MCF 10A (cell line): ENCODE measurements at regions of chr11 and their contacts with region 1.

Region 1: DNA sequence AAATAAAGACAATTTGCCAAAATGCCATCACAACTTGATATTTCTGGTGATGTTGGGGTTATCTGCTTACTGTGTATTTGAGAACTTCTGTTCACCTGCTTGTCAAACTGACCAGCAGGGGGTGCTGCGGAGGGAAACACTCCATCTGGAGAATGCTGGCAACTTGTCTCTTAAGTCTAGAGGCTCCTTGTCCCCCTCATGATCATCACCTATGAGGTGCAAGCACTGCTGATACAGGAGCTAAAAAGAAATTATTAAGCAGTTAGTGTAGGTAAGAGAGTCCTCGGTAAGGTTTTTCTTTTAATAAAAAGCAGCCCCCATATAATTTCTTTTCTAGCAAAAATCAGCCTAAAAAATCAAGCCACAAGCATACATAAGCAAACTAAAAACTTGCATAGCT is 32.7 kb upstream of the GLYATL1B start:
- DNase-seq: peak; percentile 69
- H3K4me3 Mint-ChIP-seq: no peak overlapping the region
- H3K27ac Mint-ChIP-seq: no peak overlapping the region
- H3K4me1 Mint-ChIP-seq: peaks cover 7% of the 10 kb centered on the region
- H3K27me3 Mint-ChIP-seq: peaks cover 64% of the 10 kb centered on the region
- CTCF ChIP-seq: peak; percentile 71

Region 2: DNA sequence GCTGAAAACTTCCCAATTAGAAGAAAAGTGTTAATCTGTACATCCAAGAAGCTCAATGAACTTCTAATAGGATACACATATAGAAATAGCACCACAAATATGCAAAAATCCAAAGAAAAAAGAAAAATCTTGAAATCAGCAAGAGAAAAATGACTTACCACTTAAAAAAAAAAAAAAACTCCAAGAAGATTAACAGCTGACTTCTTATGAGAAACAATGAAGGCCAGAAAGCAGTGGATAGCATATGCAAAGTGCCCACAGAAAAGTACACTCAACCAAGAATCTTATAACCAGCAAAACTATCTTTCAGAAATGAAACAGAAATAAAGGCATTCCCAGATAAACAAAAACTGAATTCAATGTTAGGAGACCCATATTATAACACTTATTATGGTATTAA is 581.5 kb before region 1 on chr11:
- CTCF ChIA-PET with region 1: no interaction called
- POLR2A ChIA-PET with region 1: no interaction called
- intact Hi-C with region 1: no loop called
- DNase-seq: no peak
- H3K4me3 Mint-ChIP-seq: no peak overlapping the region
- H3K27ac Mint-ChIP-seq: no peak overlapping the region
- H3K4me1 Mint-ChIP-seq: no peaks in the 10 kb centered on the region
- H3K27me3 Mint-ChIP-seq: no peaks in the 10 kb centered on the region
- CTCF ChIP-seq: no peak

Region 3: DNA sequence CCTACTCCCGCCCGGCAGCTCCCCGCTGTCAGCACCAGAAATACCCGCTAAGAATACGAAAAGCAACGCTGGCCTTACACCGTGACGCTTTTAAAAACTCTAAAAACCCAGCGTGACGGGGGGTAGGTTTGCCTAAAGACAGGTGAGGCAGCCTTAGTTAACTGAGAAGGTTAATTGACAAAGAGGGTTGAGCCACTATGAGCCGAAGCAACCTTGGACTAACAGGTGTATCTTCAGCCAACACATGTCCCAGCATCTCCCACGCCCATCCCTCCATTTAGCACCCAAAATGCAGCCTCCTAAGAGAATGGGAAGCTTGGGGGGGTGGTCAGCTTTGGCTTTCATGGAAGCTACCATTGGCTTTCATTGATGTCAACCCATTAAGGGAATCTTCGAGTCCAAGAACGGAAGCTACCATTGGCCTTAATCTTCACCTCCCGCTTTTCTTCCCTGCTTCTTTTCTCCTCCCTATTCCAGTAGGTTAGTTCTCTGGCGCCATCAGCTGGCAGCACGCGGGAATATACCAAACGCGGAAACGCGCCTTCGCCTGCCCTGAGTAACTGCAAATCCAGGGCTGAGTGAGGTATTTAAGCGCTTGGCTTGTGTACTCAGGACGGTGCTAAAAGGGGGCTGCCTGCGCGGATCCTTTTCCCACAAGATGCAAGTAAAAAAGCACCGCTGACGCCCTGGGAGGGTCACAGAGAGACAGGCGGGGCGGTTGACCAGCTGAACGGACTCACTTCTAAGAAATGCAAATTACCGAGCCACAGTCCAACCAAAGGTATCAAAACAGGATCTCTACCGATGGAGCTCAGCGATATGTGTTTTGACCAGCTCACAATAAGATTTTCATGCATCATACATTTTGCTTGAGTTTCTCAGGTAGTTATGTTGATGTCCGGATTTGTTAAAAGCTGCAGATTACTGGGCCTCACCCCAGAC is 152.6 kb before region 1 on chr11:
- CTCF ChIA-PET with region 1: interaction called, 4 read pairs
- POLR2A ChIA-PET with region 1: no interaction called
- intact Hi-C with region 1: loop called (anchors 10 kb)
- DNase-seq: peak; percentile 77
- H3K4me3 Mint-ChIP-seq: no peak overlapping the region
- H3K27ac Mint-ChIP-seq: no peak overlapping the region
- H3K4me1 Mint-ChIP-seq: peaks cover 19% of the 10 kb centered on the region
- H3K27me3 Mint-ChIP-seq: no peaks in the 10 kb centered on the region
- CTCF ChIP-seq: peak; percentile 60

Region 4: GRCh38 chr11:58923300-58923788 is 130.0 kb before region 1 on chr11:
- CTCF ChIA-PET with region 1: interaction called, 11 read pairs
- POLR2A ChIA-PET with region 1: no interaction called
- intact Hi-C with region 1: no loop called
- DNase-seq: peak; percentile 84
- H3K4me3 Mint-ChIP-seq: peak overlapping the region; percentile 49
- H3K27ac Mint-ChIP-seq: peak overlapping the region; percentile 46
- H3K4me1 Mint-ChIP-seq: peaks cover 14% of the 10 kb centered on the region
- H3K27me3 Mint-ChIP-seq: no peaks in the 10 kb centered on the region
- CTCF ChIP-seq: no peak

Region 5: GRCh38 chr11:59069087-59069486 is 15.7 kb after region 1 on chr11:
- CTCF ChIA-PET with region 1: interaction called, 11 read pairs
- POLR2A ChIA-PET with region 1: no interaction called
- intact Hi-C with region 1: no loop called
- DNase-seq: no peak
- H3K4me3 Mint-ChIP-seq: no peak overlapping the region
- H3K27ac Mint-ChIP-seq: no peak overlapping the region
- H3K4me1 Mint-ChIP-seq: no peaks in the 10 kb centered on the region
- H3K27me3 Mint-ChIP-seq: peaks cover 90% of the 10 kb centered on the region
- CTCF ChIP-seq: no peak